ENCODE measurements at regions of chr1 and their contacts with region 1.

Region 1: DNA sequence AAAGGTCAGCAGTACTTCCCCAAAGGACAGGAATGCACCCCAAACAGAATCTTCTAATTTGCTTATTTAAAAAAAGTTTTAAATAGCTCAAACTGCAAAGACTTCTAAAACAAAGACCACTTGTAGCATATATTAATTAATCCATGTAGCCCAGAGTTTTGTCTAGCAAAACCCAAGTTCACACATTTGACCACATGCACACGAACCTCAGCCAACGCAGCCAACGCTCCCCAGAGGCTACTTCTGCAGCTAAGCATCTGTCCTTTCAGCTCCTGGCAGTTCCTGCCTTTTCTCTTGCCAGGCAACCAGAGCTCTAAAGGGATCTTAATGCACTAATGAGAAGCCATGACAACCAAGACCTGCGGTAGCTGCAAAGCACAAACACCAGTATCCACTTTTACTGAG is 89.6 kb downstream of the RERE start:
- DNase-seq: no peak
- H3K4me3 ChIP-seq: no peak overlapping the region
- H3K27ac ChIP-seq: no peak overlapping the region
- H3K4me1 ChIP-seq: peaks cover 0 to 4% (median 2%) of the 10 kb centered on the region in 3 donors
- H3K27me3 ChIP-seq: no peaks in the 10 kb centered on the region
- CTCF ChIP-seq: no peak

Region 2: DNA sequence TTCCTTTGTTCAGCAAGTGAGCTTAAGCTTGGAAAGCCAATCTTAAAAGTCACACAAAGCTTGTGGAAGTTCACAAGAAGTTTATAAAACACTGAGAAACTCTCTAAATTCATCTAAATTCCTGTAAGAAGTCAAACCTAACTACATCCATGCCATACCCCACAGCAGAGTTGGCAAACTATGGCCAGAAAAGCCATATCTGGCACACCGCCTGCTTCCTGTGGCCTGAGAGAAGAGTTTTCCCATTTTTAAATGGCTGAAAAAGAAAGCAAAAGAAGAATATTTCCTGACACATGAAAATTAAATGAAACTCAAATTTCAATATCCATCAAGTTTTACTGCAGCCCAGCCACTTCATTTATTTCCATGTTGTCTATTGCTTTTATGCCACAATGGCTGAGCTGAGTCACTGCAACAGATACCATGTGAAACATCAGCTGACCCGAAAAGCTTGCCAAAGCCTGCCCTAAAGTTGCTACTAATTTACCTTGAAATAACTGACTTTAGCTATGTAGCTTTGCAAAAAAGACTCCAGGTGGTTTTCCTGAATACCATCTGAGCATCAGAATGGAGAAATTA is 172.8 kb before region 1 on chr1:
- intact Hi-C with region 1: loop called (anchors 10 kb)
- DNase-seq: no peak
- H3K4me3 ChIP-seq: no peak overlapping the region
- H3K27ac ChIP-seq: peak overlapping the region in 1 of 2 donors; percentile 29
- H3K4me1 ChIP-seq: peaks cover 0 to 8% (median 0%) of the 10 kb centered on the region in 3 donors
- H3K27me3 ChIP-seq: no peaks in the 10 kb centered on the region
- CTCF ChIP-seq: no peak

Measured in kidney (tissue), 22 donors.